Breast epithelium (tissue), 4 donors: ENCODE measurements at regions of chr12 and their contacts with region 1.

Region 1: GRCh38 chr12:130958557-130959140 is 4.9 kb downstream of the ADGRD1 start:
- DNase-seq: no peak
- H3K4me3 ChIP-seq: no peak overlapping the region
- H3K27ac ChIP-seq: no peak overlapping the region
- H3K4me1 ChIP-seq: no peaks in the 10 kb centered on the region
- H3K27me3 ChIP-seq: peaks cover 0 to 12% of the 10 kb centered on the region in 2 donors
- CTCF ChIP-seq: no peak
- POLR2A ChIP-seq: no peak

Region 2: GRCh38 chr12:130933269-130933995 is 25.2 kb before region 1 on chr12:
- intact Hi-C with region 1: loop called (anchors 1 kb)
- DNase-seq: no peak
- H3K4me3 ChIP-seq: peak overlapping the region in 1 of 3 donors; percentile 32
- H3K27ac ChIP-seq: no peak overlapping the region
- H3K4me1 ChIP-seq: no peaks in the 10 kb centered on the region
- H3K27me3 ChIP-seq: peaks cover 0 to 36% of the 10 kb centered on the region in 2 donors
- CTCF ChIP-seq: no peak
- POLR2A ChIP-seq: no peak

Region 3: DNA sequence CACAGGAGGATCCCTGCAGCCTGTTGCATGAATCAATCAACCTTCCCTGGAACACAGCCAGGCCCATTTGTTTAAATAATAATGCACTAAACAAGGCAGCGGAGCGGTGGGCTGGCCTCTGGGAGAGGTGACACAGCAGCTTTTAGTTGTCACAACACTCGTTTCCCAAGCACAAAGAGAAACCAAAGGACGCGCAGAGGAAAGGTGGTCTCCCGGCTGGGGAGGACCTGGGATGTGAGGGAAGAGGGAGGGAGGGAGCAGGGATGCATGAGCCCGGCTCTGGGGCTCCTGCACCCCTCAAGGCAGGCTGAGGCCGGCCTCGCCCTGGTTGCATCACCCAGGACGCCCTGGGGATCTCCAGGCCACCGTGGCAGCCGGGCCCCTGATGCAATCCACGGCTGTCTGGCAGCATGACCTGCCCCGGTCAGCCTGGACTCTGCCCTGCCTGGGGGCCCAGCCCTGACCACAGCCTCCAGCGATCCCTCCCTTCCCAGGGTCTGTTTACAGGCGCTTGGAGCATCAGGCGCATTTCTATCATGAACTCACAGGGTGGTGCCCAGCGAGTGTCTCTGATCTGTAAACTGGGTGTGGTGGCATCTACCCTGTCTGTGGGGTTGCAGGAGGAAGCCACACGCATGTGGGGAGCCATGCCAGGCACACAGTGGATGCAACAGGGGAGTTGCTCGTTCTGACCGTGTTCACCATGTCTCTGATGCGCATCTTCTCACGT is 902.1 kb after region 1 on chr12:
- intact Hi-C with region 1: no loop called
- DNase-seq: no peak
- H3K4me3 ChIP-seq: peak overlapping the region in 1 of 3 donors; percentile 31
- H3K27ac ChIP-seq: peak overlapping the region in 1 of 2 donors; percentile 19
- H3K4me1 ChIP-seq: no peaks in the 10 kb centered on the region
- H3K27me3 ChIP-seq: peaks cover 0 to 4% of the 10 kb centered on the region in 2 donors
- CTCF ChIP-seq: no peak
- POLR2A ChIP-seq: no peak